Posterior vena cava (tissue), 2 donors: ENCODE measurements at regions of chr14 and their contacts with region 1.

Region 1: DNA sequence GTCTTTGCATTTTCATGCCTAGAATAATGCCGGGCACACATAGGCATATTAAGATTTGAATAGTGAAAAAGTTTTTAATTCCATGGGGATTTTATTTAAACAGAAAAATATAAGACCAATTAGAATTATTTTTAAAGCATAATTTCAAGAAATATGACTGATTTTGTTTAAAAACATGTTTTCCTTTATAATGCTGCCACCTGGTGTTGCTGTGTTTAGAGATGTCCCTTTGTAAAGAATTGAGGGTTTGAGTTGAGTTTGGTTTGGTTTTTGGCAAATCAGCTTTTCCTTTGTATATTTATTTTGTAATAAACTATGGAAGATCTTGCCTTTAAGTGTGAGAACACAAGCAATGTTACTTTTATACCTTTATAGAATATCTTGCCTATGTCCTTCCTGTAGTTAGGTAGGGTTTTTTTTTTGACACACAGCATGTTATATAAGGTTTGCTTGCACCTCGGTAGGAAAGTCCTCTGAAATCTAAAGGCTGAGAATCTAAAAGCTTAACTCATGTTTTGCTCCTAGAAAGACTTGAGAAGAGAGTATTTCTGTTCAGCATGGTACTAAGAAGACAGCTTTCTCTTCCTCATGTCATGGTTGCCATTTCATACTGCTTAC is 31.4 kb upstream of the SNAPC1 start:
- DNase-seq: no peak

Region 2: GRCh38 chr14:61461808-61462275 is 269.0 kb before region 1 on chr14:
- intact Hi-C with region 1: loop called in 1 of 2 experiments (anchors 10 kb)
- DNase-seq: no peak

Region 3: DNA sequence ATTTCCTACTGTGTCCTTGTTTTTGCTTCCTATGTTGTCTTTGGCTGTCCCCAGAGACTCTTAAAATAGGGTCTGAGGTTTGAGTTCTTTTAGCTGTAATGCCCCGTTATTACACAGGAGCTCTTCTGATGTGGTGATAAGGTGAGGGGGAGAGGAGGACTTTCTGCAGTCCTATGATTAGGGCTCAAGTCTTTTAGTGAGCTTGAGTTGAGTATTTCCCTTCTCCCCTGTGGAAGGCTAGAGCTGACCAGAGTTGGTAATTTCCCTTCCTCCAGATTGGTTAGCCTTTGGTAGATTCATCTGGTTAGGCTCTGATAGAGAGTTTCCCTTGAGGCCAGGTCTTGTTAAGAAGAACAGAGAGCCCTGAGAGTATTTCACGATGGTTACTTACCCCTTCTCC is 39.9 kb before region 1 on chr14:
- intact Hi-C with region 1: no loop called
- DNase-seq: no peak

Region 4: GRCh38 chr14:61703342-61704129 is 27.3 kb before region 1 on chr14:
- intact Hi-C with region 1: no loop called
- DNase-seq: no peak